ENCODE measurements at regions of chr15 and their contacts with region 1.

Region 1: GRCh38 chr15:74438721-74439316 is 5.1 kb upstream of the SEMA7A start:
- DNase-seq: peak; percentile 86

Region 2: GRCh38 chr15:74382004-74382816 is 56.6 kb before region 1 on chr15:
- intact Hi-C with region 1: loop called (anchors 1 kb)
- DNase-seq: peak; percentile 94

Region 3: GRCh38 chr15:74396445-74397238 is 42.2 kb before region 1 on chr15:
- intact Hi-C with region 1: no loop called
- DNase-seq: no peak

Region 4: GRCh38 chr15:74422650-74423430 is 16.0 kb before region 1 on chr15:
- intact Hi-C with region 1: no loop called
- DNase-seq: no peak

Region 5: GRCh38 chr15:74489518-74490338 is 50.9 kb after region 1 on chr15:
- intact Hi-C with region 1: loop called (anchors 5 kb)
- DNase-seq: no peak

Measured in cardiac septum (tissue), 1 donor.